MCF 10A (cell line): ENCODE measurements at regions of chr17 and their contacts with region 1.

Region 1: DNA sequence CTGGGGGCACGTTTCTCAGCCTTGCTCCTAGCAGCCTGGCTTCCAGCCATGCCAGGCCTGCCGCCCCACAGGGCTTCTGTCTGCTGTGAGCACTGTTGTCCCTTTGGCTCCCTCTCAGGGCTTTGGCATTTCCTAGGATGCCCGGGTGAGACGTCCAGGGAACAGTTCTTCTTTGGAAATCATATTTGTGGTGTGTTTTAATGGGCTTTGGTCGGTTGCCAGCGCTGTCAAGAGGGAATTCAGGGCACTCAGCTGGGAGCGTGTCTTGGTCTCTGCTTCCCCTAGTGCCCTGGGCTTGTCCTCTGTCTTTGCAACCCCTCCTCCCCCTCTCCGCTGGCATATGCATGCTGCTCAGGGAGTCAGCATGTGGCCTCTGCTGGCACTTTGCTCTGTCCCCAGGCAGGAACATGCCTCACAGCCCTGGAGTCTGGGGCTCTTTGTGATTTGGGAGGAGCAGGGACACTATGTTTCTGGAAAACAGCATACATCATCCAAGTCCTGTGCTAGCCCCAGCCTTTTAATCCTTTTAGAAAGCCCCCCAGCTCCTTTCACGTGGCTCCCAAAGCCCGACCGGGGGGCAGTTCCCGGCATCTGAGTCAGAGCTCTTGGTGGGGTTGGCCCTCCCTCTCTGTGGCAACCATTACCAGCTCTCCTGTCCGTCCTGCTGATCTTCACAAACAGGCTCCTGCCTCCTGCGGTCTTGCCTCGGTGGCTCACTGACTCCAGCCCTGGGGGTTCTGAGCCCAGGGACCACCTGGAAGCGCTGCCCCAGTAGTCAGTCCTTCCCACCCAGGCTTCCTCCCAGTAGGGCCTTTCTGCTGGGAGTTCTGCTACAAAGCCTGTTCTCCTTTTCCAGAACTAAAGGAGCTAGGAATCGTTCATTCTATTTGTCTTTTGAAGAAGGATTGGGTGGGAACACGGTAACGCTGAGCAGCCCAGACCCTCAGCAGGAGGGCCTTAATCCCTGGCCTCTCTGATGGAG is 26.7 kb downstream of the SAP30BP start:
- DNase-seq: peak; percentile 99
- H3K4me3 Mint-ChIP-seq: peak overlapping the region; percentile 28
- H3K27ac Mint-ChIP-seq: peak overlapping the region; percentile 96
- H3K4me1 Mint-ChIP-seq: peaks cover 73% of the 10 kb centered on the region
- H3K27me3 Mint-ChIP-seq: no peaks in the 10 kb centered on the region
- CTCF ChIP-seq: no peak

Region 2: GRCh38 chr17:75557075-75557882 is 136.5 kb before region 1 on chr17:
- CTCF ChIA-PET with region 1: no interaction called
- POLR2A ChIA-PET with region 1: no interaction called
- intact Hi-C with region 1: no loop called
- DNase-seq: peak; percentile 56
- H3K4me3 Mint-ChIP-seq: no peak overlapping the region
- H3K27ac Mint-ChIP-seq: no peak overlapping the region
- H3K4me1 Mint-ChIP-seq: no peaks in the 10 kb centered on the region
- H3K27me3 Mint-ChIP-seq: no peaks in the 10 kb centered on the region
- CTCF ChIP-seq: no peak

Region 3: DNA sequence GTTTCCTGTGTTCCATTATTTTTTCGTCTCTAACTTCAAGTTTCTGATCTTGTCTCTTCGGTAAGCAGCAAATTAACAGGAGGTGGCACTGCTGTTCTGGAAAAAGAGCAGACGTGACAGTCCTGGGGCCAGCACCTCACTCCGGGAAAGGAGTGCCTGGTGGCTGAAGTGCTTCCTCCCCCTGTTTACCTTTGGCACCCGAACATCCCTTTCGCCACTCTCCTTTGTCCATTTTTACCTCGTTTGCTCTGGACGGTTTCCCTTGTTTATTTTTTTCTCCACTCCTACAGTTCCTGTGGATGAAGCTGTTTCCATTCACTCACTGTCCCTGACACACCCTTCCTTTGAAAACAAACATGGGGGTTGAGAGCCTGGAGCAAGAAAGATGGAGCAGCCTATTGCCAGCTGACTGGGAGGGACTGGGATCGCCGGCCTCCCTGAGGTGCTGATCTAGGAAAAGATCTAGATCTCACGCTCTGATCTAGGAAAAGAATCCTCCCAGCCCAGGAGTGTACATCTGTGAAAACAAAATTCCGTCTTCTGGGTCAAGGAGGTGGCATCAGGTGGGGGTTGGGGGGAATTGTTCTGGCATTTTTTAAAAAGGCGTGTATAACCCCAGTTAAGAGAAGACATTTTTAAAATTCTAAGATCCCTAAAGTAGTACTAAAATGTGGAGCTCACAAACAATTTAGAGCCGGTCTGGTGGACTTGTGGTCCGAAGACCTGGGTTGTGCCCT is 13.9 kb before region 1 on chr17:
- CTCF ChIA-PET with region 1: interaction called, 22 read pairs
- POLR2A ChIA-PET with region 1: no interaction called
- intact Hi-C with region 1: no loop called
- DNase-seq: peak; percentile 92
- H3K4me3 Mint-ChIP-seq: peak overlapping the region; percentile 60
- H3K27ac Mint-ChIP-seq: peak overlapping the region; percentile 91
- H3K4me1 Mint-ChIP-seq: peaks cover 40% of the 10 kb centered on the region
- H3K27me3 Mint-ChIP-seq: no peaks in the 10 kb centered on the region
- CTCF ChIP-seq: peak; percentile 60